ENCODE measurements at regions of chr2 and their contacts with region 1.

Region 1: GRCh38 chr2:219388127-219388844 is 574 bp upstream of the DNPEP start:
- DNase-seq: peak; percentile 98
- H3K4me3 Mint-ChIP-seq: peak overlapping the region; percentile 90
- H3K27ac Mint-ChIP-seq: peak overlapping the region; percentile 59
- H3K4me1 Mint-ChIP-seq: peaks cover 23% of the 10 kb centered on the region
- H3K27me3 Mint-ChIP-seq: no peaks in the 10 kb centered on the region

Region 2: DNA sequence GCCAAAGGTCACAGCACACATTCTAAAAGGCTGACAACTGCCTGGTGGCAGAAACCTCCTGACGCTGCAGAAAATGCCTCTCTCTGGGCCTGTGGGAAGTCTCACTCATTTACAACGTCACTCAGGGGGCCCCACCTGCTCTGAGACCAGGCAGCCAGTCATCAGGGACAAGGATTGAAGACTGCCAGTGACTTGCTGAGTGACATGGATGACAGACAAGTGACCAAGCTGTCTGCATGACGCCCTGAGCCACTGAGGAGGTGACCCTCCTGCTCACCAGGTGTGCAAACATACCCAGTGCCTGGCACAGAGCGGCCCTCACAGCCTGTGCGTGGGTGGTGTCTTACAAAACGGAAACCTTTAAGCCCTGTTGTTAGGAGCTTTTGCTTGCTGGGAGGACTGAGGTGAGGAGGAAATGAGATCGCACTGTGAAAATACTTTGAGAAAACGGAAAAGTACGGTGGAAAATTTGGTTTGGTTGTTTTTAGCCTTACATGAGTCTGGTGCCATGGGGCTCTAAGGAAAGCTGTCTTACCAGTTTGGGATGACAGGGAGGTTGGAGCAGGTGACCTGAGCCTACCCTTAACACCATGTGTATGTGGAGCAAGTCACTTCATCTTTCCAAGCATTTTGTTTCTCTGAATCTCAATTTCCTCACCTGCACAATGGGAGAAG is 1777.7 kb before region 1 on chr2:
- CTCF ChIA-PET with region 1: no interaction called
- intact Hi-C with region 1: loop called (anchors 5 kb)
- DNase-seq: peak; percentile 89
- H3K4me3 Mint-ChIP-seq: peak overlapping the region; percentile 25
- H3K27ac Mint-ChIP-seq: peak overlapping the region; percentile 84
- H3K4me1 Mint-ChIP-seq: peaks cover 54% of the 10 kb centered on the region
- H3K27me3 Mint-ChIP-seq: no peaks in the 10 kb centered on the region

Region 3: DNA sequence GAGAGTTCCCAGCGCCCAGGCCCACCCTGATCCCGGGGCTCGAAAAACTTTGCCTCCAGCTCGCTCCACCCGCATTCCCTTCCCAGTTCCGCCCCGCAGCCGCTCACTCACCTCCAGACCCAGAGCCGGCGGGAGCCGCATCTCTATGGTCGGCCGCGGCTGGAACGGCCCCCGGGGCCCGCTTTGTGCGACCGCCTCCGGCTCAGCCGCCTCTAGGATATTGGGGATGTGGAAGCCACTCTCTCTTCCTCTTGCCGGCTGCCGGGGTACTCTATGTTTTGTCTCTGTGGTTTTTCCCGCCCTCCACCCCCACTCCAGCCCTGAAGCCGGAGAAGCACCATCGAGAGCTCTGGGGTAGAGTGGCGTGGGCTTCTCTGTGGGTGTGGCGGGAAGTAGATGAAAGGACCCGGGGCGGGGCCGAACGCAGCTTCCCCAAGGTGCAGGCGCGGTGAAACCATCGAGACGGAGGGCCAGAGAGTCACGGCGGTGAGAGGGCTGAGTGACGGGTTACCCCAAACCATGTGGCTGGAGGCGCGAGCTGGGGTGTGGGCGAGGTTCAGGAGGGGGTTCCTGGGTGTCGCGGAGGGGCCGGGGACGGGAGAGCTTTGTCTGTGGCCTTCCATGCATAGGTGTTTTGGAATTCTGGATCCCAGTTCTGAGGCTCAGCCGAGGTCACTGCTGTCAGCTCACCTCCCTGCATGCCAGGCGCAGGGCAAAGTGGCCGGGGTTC is 728.9 kb before region 1 on chr2 and contains the starts of genes BCS1L and ZNF142:
- CTCF ChIA-PET with region 1: no interaction called
- intact Hi-C with region 1: loop called (anchors 2 kb)
- DNase-seq: peak; percentile 98
- H3K4me3 Mint-ChIP-seq: peak within 1 kb of the TSS; percentile 90
- H3K27ac Mint-ChIP-seq: peak within 1 kb of the TSS; percentile 81
- H3K4me1 Mint-ChIP-seq: peaks cover 40% of the 10 kb centered on the region
- H3K27me3 Mint-ChIP-seq: no peaks in the 10 kb centered on the region
- total RNA-seq, gene BCS1L: 61.3 to 63.6 TPM
- total RNA-seq, gene ZNF142: 28.0 to 28.4 TPM

Region 4: GRCh38 chr2:219160186-219161017 is 227.9 kb before region 1 on chr2 and contains the start of gene NHEJ1:
- CTCF ChIA-PET with region 1: no interaction called
- intact Hi-C with region 1: loop called (anchors 1 kb)
- DNase-seq: peak; percentile 96
- H3K4me3 Mint-ChIP-seq: peak within 1 kb of the TSS; percentile 80
- H3K27ac Mint-ChIP-seq: peak within 1 kb of the TSS; percentile 88
- H3K4me1 Mint-ChIP-seq: peaks cover 13% of the 10 kb centered on the region
- H3K27me3 Mint-ChIP-seq: no peaks in the 10 kb centered on the region
- total RNA-seq, gene NHEJ1: 24.4 to 26.6 TPM

Region 5: DNA sequence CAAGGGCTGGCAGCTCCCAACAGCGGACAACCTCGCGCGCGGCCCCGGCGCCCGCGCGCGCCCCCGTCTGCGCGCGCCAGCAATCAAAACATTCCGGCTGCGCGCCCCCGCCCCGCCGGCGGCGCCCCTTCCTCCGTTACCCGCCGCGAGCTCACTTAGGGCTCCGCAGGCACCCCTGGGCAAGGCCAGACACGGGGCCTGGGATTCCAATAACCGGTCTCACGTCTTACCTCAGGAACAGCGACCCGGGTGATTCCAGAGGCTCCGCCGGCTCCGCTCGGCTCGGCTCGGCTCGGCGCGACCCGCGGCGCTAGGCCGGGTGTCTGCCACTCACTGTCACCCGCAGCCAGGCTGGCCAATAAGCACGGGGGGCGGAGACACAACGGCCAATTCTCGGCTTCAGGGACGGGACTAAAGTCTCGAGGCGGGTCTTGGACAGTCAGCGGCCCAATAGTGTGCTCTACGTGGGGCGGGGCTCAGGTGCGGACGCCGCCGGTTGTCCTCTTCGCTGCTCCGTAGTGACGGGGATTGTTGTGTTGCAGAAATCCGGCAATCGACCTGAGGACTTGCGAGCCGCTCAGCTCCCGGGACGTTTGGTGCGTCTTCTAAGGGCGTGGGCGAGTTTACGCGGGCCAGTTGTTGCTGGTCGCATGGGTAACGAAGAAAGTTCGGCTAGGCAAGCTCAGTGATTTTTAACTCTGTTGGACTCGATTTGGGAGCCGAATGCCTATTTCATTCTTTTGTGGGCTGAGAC is 158.8 kb before region 1 on chr2 and contains the starts of genes ANKZF1 and ATG9A:
- CTCF ChIA-PET with region 1: no interaction called
- intact Hi-C with region 1: loop called (anchors 1 kb)
- DNase-seq: peak; percentile 99
- H3K4me3 Mint-ChIP-seq: peak within 1 kb of the TSS; percentile 96
- H3K27ac Mint-ChIP-seq: peak within 1 kb of the TSS; percentile 97
- H3K4me1 Mint-ChIP-seq: peaks cover 48% of the 10 kb centered on the region
- H3K27me3 Mint-ChIP-seq: no peaks in the 10 kb centered on the region
- total RNA-seq, gene ANKZF1: 87.7 to 88.5 TPM
- total RNA-seq, gene ATG9A: 26.0 to 27.7 TPM

Region 6: GRCh38 chr2:219402665-219403515 is 14.6 kb after region 1 on chr2:
- CTCF ChIA-PET with region 1: interaction called, 38 read pairs
- intact Hi-C with region 1: no loop called
- DNase-seq: peak; percentile 76
- H3K4me3 Mint-ChIP-seq: no peak overlapping the region
- H3K27ac Mint-ChIP-seq: no peak overlapping the region
- H3K4me1 Mint-ChIP-seq: no peaks in the 10 kb centered on the region
- H3K27me3 Mint-ChIP-seq: no peaks in the 10 kb centered on the region

Region 7: GRCh38 chr2:219543601-219544358 is 155.5 kb after region 1 on chr2 and contains the starts of genes CHPF and TMEM198:
- CTCF ChIA-PET with region 1: interaction called, 6 read pairs
- intact Hi-C with region 1: loop called (anchors 1 kb)
- DNase-seq: peak; percentile 97
- H3K4me3 Mint-ChIP-seq: peak within 1 kb of the TSS; percentile 79
- H3K27ac Mint-ChIP-seq: no peak within 1 kb of the TSS
- H3K4me1 Mint-ChIP-seq: peaks cover 20% of the 10 kb centered on the region
- H3K27me3 Mint-ChIP-seq: peaks cover 8% of the 10 kb centered on the region
- total RNA-seq, gene CHPF: 8.5 to 9.0 TPM
- total RNA-seq, gene TMEM198: 0.86 to 1.1 TPM

Measured in activated naive CD4-positive, alpha-beta T cell treated with anti-CD3 and anti-CD28 coated beads for 36 hours (primary cell).